Heart left ventricle (tissue), 16 donors: ENCODE measurements at regions of chr1 and their contacts with region 1.

Region 1: GRCh38 chr1:164786980-164787833 is 228.2 kb downstream of the PBX1 start:
- DNase-seq: peak; percentile 79 to 88 (median 82)
- ATAC-seq: peak; percentile 76 to 89 (median 88)
- H3K4me3 ChIP-seq: no peak overlapping the region
- H3K27ac ChIP-seq: peak overlapping the region in 7 of 12 donors; percentile 22 to 80 (median 63)
- H3K4me1 ChIP-seq: peaks cover 0 to 75% (median 33%) of the 10 kb centered on the region in 12 donors
- H3K27me3 ChIP-seq: no peaks in the 10 kb centered on the region
- CTCF ChIP-seq: peak; percentile 85 to 93 (median 90)
- POLR2A ChIP-seq: no peak

Region 2: GRCh38 chr1:163535807-163536206 is 1251.4 kb before region 1 on chr1:
- intact Hi-C with region 1: loop called in 1 of 10 experiments (anchors 10 kb)
- DNase-seq: no peak
- ATAC-seq: peak in 1 of 4 donors; percentile 58
- H3K4me3 ChIP-seq: no peak overlapping the region
- H3K27ac ChIP-seq: no peak overlapping the region
- H3K4me1 ChIP-seq: peaks cover 0 to 5% (median 0%) of the 10 kb centered on the region in 12 donors
- H3K27me3 ChIP-seq: no peaks in the 10 kb centered on the region
- CTCF ChIP-seq: peak in 10 of 12 donors; percentile 11 to 43 (median 33)
- POLR2A ChIP-seq: no peak

Region 3: GRCh38 chr1:164320790-164321731 is 466.1 kb before region 1 on chr1:
- intact Hi-C with region 1: loop called in 1 of 10 experiments (anchors 10 kb)
- DNase-seq: peak; percentile 10 to 66 (median 28)
- ATAC-seq: peak; percentile 26 to 93 (median 76)
- H3K4me3 ChIP-seq: peak overlapping the region; percentile 24 to 62 (median 49)
- H3K27ac ChIP-seq: peak overlapping the region in 1 of 12 donors; percentile 19
- H3K4me1 ChIP-seq: peaks cover 0 to 5% (median 0%) of the 10 kb centered on the region in 12 donors
- H3K27me3 ChIP-seq: peaks cover 0 to 4% (median 0%) of the 10 kb centered on the region in 9 donors
- CTCF ChIP-seq: no peak
- POLR2A ChIP-seq: no peak

Region 4: GRCh38 chr1:164510435-164510834 is 276.8 kb before region 1 on chr1:
- intact Hi-C with region 1: loop called in 1 of 10 experiments (anchors 10 kb)
- DNase-seq: no peak
- ATAC-seq: no peak
- H3K4me3 ChIP-seq: no peak overlapping the region
- H3K27ac ChIP-seq: no peak overlapping the region
- H3K4me1 ChIP-seq: peaks cover 0 to 6% (median 0%) of the 10 kb centered on the region in 12 donors
- H3K27me3 ChIP-seq: no peaks in the 10 kb centered on the region
- CTCF ChIP-seq: peak in 3 of 12 donors; percentile 14 to 38 (median 18)
- POLR2A ChIP-seq: no peak

Region 5: DNA sequence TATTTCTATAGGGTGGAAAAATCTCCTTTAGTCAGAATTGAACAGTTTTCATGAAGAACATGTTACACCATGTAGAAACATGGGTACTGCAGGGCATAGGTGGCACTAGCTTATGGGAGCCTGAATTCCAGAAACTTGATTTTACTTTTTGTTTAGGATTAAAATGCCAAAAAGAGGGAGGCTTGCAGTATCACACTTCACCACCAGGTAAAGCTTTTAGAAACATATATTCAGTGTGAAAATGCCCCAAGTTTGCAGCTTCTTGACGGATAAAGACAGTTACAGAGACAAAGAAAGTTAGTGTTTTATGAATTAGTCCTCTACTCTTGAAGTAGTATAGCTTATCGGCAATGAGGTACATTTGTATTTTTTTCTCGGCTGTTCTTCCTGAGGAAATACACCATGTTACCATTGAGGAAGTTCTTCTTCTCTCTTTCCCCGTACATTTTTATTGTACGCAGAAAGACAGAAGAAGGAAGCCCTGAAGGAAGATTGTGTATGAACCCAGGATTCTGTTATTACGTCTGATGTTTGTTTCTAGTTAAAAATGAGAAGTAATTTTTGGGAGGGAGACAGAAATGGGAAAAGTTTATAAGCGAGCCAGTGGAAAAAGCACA is 162.1 kb before region 1 on chr1:
- intact Hi-C with region 1: loop called in 7 of 10 experiments (anchors 5 to 10 kb)
- DNase-seq: no peak
- ATAC-seq: no peak
- H3K4me3 ChIP-seq: no peak overlapping the region
- H3K27ac ChIP-seq: peak overlapping the region in 1 of 12 donors; percentile 49
- H3K4me1 ChIP-seq: peaks cover 0 to 48% (median 24%) of the 10 kb centered on the region in 12 donors
- H3K27me3 ChIP-seq: no peaks in the 10 kb centered on the region
- CTCF ChIP-seq: peak in 5 of 12 donors; percentile 11 to 43 (median 24)
- POLR2A ChIP-seq: no peak

Region 6: GRCh38 chr1:164914208-164914607 is 127.0 kb after region 1 on chr1:
- intact Hi-C with region 1: loop called in 5 of 10 experiments (anchors 5 to 10 kb)
- DNase-seq: no peak
- ATAC-seq: peak; percentile 79 to 84 (median 83)
- H3K4me3 ChIP-seq: no peak overlapping the region
- H3K27ac ChIP-seq: no peak overlapping the region
- H3K4me1 ChIP-seq: peaks cover 0 to 13% (median 0%) of the 10 kb centered on the region in 12 donors
- H3K27me3 ChIP-seq: no peaks in the 10 kb centered on the region
- CTCF ChIP-seq: peak in 9 of 12 donors; percentile 31 to 54 (median 43)
- POLR2A ChIP-seq: no peak